ENCODE measurements at regions of chr15 and their contacts with region 1.

Region 1: DNA sequence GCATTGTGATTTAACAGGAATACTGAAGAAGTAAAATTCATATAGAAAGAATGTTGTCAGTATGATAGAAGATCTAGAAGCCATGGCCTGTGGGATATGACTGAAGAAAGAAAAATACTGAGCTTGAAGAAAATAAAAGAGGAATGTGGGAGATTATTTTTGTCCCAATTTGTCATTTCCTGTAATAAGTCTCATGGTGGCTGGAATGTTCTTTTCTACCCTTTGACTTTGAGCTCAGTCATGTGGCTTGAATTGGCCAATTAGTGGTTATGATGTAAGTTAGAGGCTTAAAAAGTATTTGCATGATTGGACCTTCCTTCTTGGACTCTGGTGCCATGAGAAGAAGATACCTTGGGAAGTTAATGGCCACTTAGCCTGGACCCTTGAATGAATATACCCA is 14.1 kb downstream of the APH1B start:
- DNase-seq: peak; percentile 77
- H3K4me3 ChIP-seq: no peak overlapping the region
- CTCF ChIP-seq: no peak

Region 2: DNA sequence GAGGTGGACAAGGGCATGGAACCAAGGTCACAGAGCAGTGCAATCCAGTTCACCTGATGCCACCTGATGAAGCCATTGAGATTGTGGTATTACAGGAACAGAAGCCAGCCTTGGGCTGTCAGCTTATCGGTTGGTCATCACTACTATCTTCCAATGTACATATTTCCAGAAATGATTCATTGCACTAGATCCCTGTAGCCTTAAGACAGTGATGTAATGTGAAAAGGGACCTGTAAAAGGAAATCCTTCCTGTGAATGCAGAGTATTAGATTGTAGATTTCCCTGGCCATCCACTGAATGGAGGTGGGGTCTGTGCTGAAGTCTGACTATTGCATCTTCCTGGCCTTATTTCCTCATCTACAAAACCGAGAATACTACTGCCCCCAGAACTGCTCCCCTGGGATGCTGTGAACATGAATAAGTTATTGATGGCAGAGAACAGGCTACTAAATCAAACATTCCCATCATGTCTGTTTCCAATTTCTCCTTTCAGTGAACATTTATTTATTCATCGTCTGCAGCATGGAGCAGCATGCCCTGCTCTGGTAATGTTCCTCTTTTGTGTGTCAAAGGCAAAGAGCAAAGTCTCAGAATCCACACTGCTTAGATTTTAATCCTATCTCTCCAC is 296.3 kb before region 1 on chr15:
- in situ Hi-C with region 1: no loop called
- DNase-seq: no peak
- H3K4me3 ChIP-seq: no peak overlapping the region
- CTCF ChIP-seq: no peak

Region 3: GRCh38 chr15:63338170-63338569 is 46.7 kb after region 1 on chr15:
- in situ Hi-C with region 1: loop called (anchors 5 kb)
- DNase-seq: peak; percentile 96
- H3K4me3 ChIP-seq: no peak overlapping the region
- CTCF ChIP-seq: no peak